ENCODE measurements at regions of chr1 and their contacts with region 1.

Region 1: DNA sequence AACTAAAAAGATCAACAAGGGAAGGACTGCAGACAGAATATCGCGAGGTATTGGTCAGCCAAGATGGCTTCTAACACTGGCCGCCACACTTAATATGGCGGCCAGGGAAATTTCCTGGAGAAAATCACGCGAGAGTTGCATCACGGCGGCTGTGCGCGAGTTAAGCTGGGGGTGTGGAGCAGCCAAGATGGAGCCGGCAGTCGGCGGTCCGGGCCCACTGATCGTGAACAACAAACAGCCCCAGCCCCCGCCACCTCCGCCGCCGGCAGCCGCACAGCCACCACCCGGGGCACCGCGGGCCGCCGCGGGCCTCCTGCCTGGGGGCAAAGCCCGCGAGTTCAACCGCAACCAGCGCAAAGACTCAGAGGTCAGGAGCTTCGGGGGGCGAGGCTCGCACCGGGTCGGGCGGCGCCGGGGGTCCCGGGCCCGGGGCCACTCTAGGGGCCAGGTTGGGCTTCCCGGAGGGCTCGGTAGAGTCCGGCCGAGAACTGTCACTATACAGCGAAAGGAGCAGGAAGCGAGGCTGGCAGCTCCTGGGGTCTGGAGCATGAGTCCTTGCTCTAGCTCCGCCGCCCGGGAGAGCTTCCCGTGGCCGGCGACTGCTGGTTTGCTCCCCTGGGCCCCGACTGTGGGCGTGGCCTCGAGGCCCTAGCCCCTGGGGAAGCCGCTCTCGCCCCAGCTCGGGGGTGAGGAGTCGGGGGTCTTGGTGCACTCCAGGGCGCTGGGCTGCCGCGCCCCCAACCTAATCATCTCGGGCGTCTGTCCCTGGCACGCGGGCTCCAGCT is at the start of gene STRIP1:
- DNase-seq: peak; percentile 95
- ATAC-seq: peak; percentile 95
- H3K4me3 Mint-ChIP-seq: peak within 1 kb of the TSS; percentile 94
- H3K27ac Mint-ChIP-seq: peak within 1 kb of the TSS; percentile 95
- H3K4me1 Mint-ChIP-seq: peaks cover 47% of the 10 kb centered on the region
- H3K27me3 Mint-ChIP-seq: no peaks in the 10 kb centered on the region
- total RNA-seq, gene STRIP1: 20.7 to 21.5 TPM

Region 2: GRCh38 chr1:109282952-109283747 is 751.5 kb before region 1 on chr1 and contains the start of gene PSRC1:
- CTCF ChIA-PET with region 1: no interaction called
- POLR2A ChIA-PET with region 1: no interaction called
- intact Hi-C with region 1: loop called in 1 of 2 experiments (anchors 1 kb)
- DNase-seq: peak; percentile 95
- ATAC-seq: peak; percentile 98
- H3K4me3 Mint-ChIP-seq: peak within 1 kb of the TSS; percentile 86
- H3K27ac Mint-ChIP-seq: peak within 1 kb of the TSS; percentile 90
- H3K4me1 Mint-ChIP-seq: peaks cover 11% of the 10 kb centered on the region
- H3K27me3 Mint-ChIP-seq: no peaks in the 10 kb centered on the region
- total RNA-seq, gene PSRC1: 17.6 to 18.4 TPM

Region 3: GRCh38 chr1:109910123-109910962 is 124.3 kb before region 1 on chr1 and contains the start of gene CSF1:
- CTCF ChIA-PET with region 1: no interaction called
- POLR2A ChIA-PET with region 1: no interaction called
- intact Hi-C with region 1: loop called in 1 of 2 experiments (anchors 1 kb)
- DNase-seq: peak; percentile 72
- ATAC-seq: peak; percentile 47
- H3K4me3 Mint-ChIP-seq: peak within 1 kb of the TSS; percentile 78
- H3K27ac Mint-ChIP-seq: peak within 1 kb of the TSS; percentile 85
- H3K4me1 Mint-ChIP-seq: peaks cover 61% of the 10 kb centered on the region
- H3K27me3 Mint-ChIP-seq: peaks cover 2% of the 10 kb centered on the region
- total RNA-seq, gene CSF1: 37.7 to 44.8 TPM

Region 4: GRCh38 chr1:109944541-109944940 is 90.1 kb before region 1 on chr1:
- CTCF ChIA-PET with region 1: no interaction called
- POLR2A ChIA-PET with region 1: no interaction called
- intact Hi-C with region 1: no loop called
- DNase-seq: no peak
- ATAC-seq: peak; percentile 30
- H3K4me3 Mint-ChIP-seq: no peak overlapping the region
- H3K27ac Mint-ChIP-seq: peak overlapping the region; percentile 39
- H3K4me1 Mint-ChIP-seq: peaks cover 9% of the 10 kb centered on the region
- H3K27me3 Mint-ChIP-seq: peaks cover 4% of the 10 kb centered on the region

Region 5: DNA sequence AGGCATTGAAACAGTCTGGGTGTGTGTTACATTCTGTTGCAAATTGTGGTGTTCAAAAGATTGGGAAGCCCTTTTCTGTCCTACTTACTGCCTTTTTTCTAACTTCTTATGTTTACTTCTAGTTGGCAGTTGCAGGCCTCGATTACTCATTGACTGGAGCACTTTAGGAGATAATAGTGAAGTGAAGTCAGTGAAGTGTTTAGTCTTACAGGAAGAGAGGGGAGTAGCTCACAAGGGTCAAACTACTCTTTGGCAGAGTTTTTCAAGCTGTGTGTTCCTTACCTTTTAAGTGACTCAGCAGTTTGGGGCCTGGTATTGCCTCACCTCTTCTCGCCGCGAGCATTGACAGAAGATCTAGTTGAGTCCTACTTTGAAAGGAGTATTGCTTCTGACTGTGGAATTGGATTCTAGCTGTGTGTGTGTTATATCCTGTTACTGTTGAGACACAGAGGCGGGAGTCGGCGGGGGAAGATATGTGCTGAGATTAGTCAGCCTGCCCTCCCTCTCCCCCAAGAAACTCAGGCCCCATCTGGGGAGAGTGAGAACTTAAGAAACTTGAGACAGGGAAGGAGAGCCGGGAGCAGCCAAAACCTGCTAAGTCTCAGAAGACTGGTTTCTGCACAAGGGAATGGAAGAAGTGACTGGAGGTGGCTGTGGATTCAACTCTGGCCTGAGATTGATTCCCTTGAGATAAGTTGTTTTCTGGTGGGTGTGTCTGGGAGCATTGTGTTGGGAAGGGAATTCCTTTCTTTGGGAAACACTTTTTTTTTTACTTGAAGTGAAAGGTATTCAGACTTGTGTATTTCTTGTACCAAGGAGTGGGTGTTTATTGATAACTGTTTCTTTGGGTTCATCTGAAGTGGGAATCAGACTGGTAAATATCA is 30.7 kb before region 1 on chr1:
- CTCF ChIA-PET with region 1: interaction called, 14 read pairs
- POLR2A ChIA-PET with region 1: no interaction called
- intact Hi-C with region 1: loop called in 1 of 2 experiments (anchors 1 kb)
- DNase-seq: peak; percentile 76
- ATAC-seq: peak; percentile 96
- H3K4me3 Mint-ChIP-seq: peak overlapping the region; percentile 14
- H3K27ac Mint-ChIP-seq: peak overlapping the region; percentile 81
- H3K4me1 Mint-ChIP-seq: peaks cover 24% of the 10 kb centered on the region
- H3K27me3 Mint-ChIP-seq: no peaks in the 10 kb centered on the region

Region 6: GRCh38 chr1:110019770-110020169 is 14.9 kb before region 1 on chr1:
- CTCF ChIA-PET with region 1: interaction called, 34 read pairs
- POLR2A ChIA-PET with region 1: no interaction called
- intact Hi-C with region 1: no loop called
- DNase-seq: no peak
- ATAC-seq: no peak
- H3K4me3 Mint-ChIP-seq: no peak overlapping the region
- H3K27ac Mint-ChIP-seq: no peak overlapping the region
- H3K4me1 Mint-ChIP-seq: no peaks in the 10 kb centered on the region
- H3K27me3 Mint-ChIP-seq: no peaks in the 10 kb centered on the region

Region 7: DNA sequence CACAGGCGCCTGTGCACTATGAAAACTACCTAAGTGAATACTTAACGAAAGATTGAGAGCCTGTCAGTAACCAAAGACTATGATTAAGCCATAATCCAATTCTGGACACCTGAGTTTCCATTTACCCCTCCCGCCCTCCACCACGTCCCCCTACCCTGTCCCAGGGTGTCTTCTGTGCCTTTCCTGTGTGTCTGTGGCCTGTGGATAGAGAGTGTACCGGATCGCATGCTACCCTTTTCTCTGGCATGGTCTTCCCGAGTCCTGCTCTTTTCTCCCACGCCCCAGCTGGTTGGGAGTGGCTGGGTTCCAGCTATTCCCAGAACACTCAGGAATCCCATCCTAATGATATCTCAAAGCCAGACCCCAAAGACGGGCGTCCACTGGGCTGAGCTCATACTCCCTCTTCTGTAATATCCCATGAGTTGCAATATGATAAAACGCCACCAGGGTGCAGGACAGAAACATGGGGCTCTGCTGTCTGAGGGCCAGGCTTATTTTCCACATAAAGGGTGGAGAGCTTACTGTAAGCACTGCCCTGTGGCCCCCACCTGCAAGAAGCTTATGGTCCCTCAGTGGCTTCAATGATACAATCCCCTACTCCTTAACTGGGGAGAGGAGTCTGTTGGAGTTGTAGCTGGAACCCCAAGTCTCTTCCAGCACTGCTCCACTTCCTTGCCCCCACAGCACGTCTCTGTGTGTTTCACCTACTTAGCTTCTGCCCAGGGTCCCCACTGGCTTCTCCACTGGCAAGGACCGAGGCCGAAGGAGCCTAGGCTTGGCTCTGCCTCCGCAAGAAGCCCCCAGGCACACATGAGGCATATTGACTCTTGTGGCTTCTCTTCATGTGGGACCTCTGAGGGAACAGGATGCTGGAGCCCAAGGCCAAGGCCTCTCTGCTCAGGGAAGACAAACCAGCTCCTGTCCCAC is 53.4 kb after region 1 on chr1:
- CTCF ChIA-PET with region 1: interaction called, 3 read pairs
- POLR2A ChIA-PET with region 1: no interaction called
- intact Hi-C with region 1: loop called in 1 of 2 experiments (anchors 1 kb)
- DNase-seq: peak; percentile 69
- ATAC-seq: peak; percentile 66
- H3K4me3 Mint-ChIP-seq: no peak overlapping the region
- H3K27ac Mint-ChIP-seq: no peak overlapping the region
- H3K4me1 Mint-ChIP-seq: peaks cover 13% of the 10 kb centered on the region
- H3K27me3 Mint-ChIP-seq: peaks cover 42% of the 10 kb centered on the region

Region 8: GRCh38 chr1:110407260-110408210 is 372.9 kb after region 1 on chr1 and contains the start of gene LAMTOR5:
- CTCF ChIA-PET with region 1: no interaction called
- POLR2A ChIA-PET with region 1: no interaction called
- intact Hi-C with region 1: loop called in 1 of 2 experiments (anchors 1 kb)
- DNase-seq: peak; percentile 95
- ATAC-seq: peak; percentile 93
- H3K4me3 Mint-ChIP-seq: peak within 1 kb of the TSS; percentile 98
- H3K27ac Mint-ChIP-seq: peak within 1 kb of the TSS; percentile 100
- H3K4me1 Mint-ChIP-seq: peaks cover 17% of the 10 kb centered on the region
- H3K27me3 Mint-ChIP-seq: no peaks in the 10 kb centered on the region
- total RNA-seq, gene LAMTOR5: 141 to 155 TPM

Region 9: GRCh38 chr1:110449661-110450651 is 415.3 kb after region 1 on chr1:
- CTCF ChIA-PET with region 1: no interaction called
- POLR2A ChIA-PET with region 1: no interaction called
- intact Hi-C with region 1: no loop called
- DNase-seq: no peak
- ATAC-seq: no peak
- H3K4me3 Mint-ChIP-seq: no peak overlapping the region
- H3K27ac Mint-ChIP-seq: no peak overlapping the region
- H3K4me1 Mint-ChIP-seq: no peaks in the 10 kb centered on the region
- H3K27me3 Mint-ChIP-seq: no peaks in the 10 kb centered on the region